Esophagus squamous epithelium (tissue), 5 donors: ENCODE measurements at regions of chr4 and their contacts with region 1.

Region 1: DNA sequence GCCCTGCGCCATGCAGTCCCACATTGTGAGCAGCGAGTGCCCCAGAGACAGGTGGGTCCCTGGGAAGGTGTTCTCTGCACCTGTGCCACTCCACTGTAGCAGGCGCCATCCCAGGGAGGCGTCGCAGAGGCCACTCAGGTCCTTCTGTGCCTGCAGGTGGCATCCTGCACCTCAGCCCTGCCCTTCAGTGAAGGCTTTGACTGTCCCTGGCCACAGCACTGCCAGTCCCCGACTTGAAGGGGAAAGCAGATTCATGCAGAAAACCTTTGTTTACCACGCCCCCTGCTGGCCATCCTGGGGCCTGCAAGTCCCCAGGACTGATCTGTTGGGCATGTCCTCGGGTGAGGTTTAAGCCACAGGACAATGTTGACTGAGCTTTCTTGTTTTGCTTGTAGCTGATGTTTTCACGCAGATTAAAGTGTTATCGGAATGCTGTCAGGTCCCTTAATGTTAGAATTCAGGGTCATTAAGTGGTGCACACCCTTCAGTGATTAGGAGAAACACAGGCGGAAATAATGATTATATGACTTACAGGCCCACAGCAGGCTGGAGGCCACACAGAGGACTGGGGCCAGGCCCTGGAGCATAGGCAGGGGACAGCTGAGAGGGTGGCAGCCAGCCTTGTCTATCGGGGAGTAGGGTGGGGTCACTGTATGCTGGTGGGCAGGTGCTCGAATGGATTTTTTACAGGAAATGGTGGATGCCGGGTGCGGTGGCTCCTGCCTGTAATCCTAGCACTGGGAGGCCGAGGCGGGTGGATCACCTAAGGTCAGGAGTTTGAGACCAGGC is 5.0 kb downstream of the TACC3 start:
- DNase-seq: peak; percentile 44
- H3K4me3 ChIP-seq: no peak overlapping the region
- H3K27ac ChIP-seq: peak overlapping the region; percentile 60 to 86 (median 76)
- H3K4me1 ChIP-seq: peaks cover 41 to 63% (median 48%) of the 10 kb centered on the region in 3 donors
- H3K27me3 ChIP-seq: no peaks in the 10 kb centered on the region
- CTCF ChIP-seq: peak; percentile 90 to 99 (median 97)
- POLR2A ChIP-seq: no peak

Region 2: GRCh38 chr4:1693129-1693896 is 33.0 kb before region 1 on chr4:
- intact Hi-C with region 1: loop called (anchors 5 kb)
- DNase-seq: no peak
- H3K4me3 ChIP-seq: no peak overlapping the region
- H3K27ac ChIP-seq: no peak overlapping the region
- H3K4me1 ChIP-seq: peaks cover 0 to 8% (median 5%) of the 10 kb centered on the region in 3 donors
- H3K27me3 ChIP-seq: no peaks in the 10 kb centered on the region
- CTCF ChIP-seq: peak; percentile 66 to 93 (median 90)
- POLR2A ChIP-seq: no peak